ENCODE measurements at regions of chr4 and their contacts with region 1.

Region 1: DNA sequence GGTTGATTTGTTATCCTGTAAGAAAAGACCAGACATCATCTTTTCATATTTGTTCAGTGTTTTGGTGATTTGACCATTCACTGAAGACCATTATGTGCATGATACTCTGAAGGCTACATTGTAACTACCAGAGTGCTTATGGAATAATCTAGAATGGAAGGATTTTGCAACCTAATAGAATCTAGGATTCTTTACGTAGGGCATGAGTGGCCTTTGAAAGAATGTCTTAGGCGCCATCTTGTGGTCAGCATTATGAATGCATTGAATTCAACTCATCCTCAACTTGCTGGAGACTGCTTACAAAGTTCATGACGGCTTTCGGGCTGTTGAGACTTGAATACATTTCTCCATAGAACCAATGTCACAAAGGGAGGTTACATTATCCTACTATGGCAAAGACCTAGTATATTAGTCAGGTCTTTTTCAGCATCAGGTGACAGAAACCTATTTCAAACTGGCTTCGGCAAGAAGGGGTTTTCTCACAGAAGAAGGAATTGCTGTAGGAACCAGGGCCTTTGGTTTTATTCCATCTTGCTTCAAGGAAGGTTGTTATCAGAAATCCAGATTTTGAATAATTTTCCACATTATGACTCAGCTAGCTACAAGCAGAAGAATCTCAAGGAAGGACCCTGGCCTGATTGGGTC is 104.1 kb downstream of the GPAT3 start:
- DNase-seq: peak; percentile 64
- ATAC-seq: peak; percentile 76
- H3K4me3 Mint-ChIP-seq: no peak overlapping the region
- H3K27ac Mint-ChIP-seq: no peak overlapping the region
- H3K4me1 Mint-ChIP-seq: peaks cover 2% of the 10 kb centered on the region
- H3K27me3 Mint-ChIP-seq: peaks cover 9% of the 10 kb centered on the region
- CTCF ChIP-seq: peak; percentile 77

Region 2: GRCh38 chr4:83490876-83491450 is 149.0 kb before region 1 on chr4:
- CTCF ChIA-PET with region 1: interaction called, 23 read pairs
- POLR2A ChIA-PET with region 1: no interaction called
- intact Hi-C with region 1: no loop called
- DNase-seq: peak; percentile 19
- ATAC-seq: peak; percentile 75
- H3K4me3 Mint-ChIP-seq: no peak overlapping the region
- H3K27ac Mint-ChIP-seq: no peak overlapping the region
- H3K4me1 Mint-ChIP-seq: peaks cover 7% of the 10 kb centered on the region
- H3K27me3 Mint-ChIP-seq: no peaks in the 10 kb centered on the region
- CTCF ChIP-seq: peak; percentile 95

Region 3: GRCh38 chr4:83503974-83504373 is 136.0 kb before region 1 on chr4:
- CTCF ChIA-PET with region 1: interaction called, 76 read pairs
- POLR2A ChIA-PET with region 1: no interaction called
- intact Hi-C with region 1: loop called (anchors 1 kb)
- DNase-seq: peak; percentile 30
- ATAC-seq: peak; percentile 47
- H3K4me3 Mint-ChIP-seq: no peak overlapping the region
- H3K27ac Mint-ChIP-seq: peak overlapping the region; percentile 3
- H3K4me1 Mint-ChIP-seq: peaks cover 12% of the 10 kb centered on the region
- H3K27me3 Mint-ChIP-seq: no peaks in the 10 kb centered on the region
- CTCF ChIP-seq: no peak

Region 4: DNA sequence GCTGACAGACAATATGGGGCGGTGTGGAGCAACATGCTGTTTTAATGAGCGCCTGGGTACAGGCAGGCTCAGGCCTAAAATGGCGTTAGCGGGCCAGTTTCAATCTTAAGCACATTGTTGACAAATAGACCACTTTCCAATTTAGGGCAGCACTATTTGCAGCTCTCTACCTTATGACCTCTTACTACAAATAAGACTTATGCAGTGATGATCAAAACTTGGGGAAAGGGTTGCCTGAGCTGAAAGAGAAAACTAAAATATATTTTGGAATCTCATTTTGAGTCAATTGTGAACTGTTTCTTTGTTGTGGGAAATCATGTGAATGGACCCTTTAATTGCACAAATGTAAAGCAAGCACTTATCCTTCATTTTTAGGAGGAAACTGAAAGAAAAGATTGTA is 129.5 kb before region 1 on chr4:
- CTCF ChIA-PET with region 1: interaction called, 76 read pairs
- POLR2A ChIA-PET with region 1: no interaction called
- intact Hi-C with region 1: loop called (anchors 1 kb)
- DNase-seq: no peak
- ATAC-seq: no peak
- H3K4me3 Mint-ChIP-seq: no peak overlapping the region
- H3K27ac Mint-ChIP-seq: no peak overlapping the region
- H3K4me1 Mint-ChIP-seq: no peaks in the 10 kb centered on the region
- H3K27me3 Mint-ChIP-seq: no peaks in the 10 kb centered on the region
- CTCF ChIP-seq: no peak

Region 5: GRCh38 chr4:84529169-84529751 is 889.3 kb after region 1 on chr4:
- CTCF ChIA-PET with region 1: interaction called, 10 read pairs
- POLR2A ChIA-PET with region 1: no interaction called
- intact Hi-C with region 1: no loop called
- DNase-seq: no peak
- ATAC-seq: no peak
- H3K4me3 Mint-ChIP-seq: no peak overlapping the region
- H3K27ac Mint-ChIP-seq: no peak overlapping the region
- H3K4me1 Mint-ChIP-seq: no peaks in the 10 kb centered on the region
- H3K27me3 Mint-ChIP-seq: peaks cover 12% of the 10 kb centered on the region
- CTCF ChIP-seq: peak; percentile 77